Heart right ventricle (tissue), 16 donors: ENCODE measurements at regions of chr3 and their contacts with region 1.

Region 1: DNA sequence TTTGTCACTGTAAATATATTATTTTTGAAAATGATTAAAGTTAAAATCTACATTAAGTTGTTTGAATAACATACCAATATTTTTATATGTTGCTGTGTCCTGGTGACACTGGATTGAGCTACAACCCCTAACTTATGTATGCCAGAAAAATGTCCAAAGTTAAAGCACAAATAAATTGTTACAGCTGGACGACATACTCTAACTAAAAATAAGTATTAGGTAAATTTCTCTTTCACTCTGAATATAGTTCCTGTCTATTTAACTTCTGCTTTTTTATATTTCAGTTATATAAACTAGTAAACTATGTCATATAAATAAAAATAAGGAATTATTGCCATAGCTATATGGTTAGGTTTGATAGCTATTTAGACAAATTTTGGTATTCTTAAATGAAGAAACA is 118.5 kb upstream of the SAMMSON start:
- DNase-seq: no peak
- ATAC-seq: no peak
- H3K4me3 ChIP-seq: no peak overlapping the region
- H3K27ac ChIP-seq: no peak overlapping the region
- H3K4me1 ChIP-seq: peaks cover 0 to 24% (median 7%) of the 10 kb centered on the region in 9 donors
- H3K27me3 ChIP-seq: no peaks in the 10 kb centered on the region
- CTCF ChIP-seq: no peak

Region 2: DNA sequence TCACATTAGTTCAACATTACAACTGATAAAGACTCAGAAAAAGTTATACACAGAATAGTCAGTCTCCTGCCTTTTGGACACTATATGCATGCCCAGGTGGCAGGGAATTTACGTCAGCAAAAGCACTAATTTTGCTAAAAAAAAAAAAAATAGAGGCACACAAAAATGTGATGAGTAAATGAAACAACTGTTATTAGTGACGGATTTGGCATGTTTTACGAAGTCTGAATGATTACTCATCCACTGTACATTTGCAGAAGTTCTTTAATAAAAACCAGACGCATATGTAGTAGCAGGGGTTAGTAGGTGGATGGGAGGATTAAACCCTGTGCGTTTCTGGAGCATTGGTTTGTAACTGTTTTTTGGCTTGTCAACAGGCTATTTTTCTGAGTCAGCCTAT is 42.8 kb before region 1 on chr3:
- intact Hi-C with region 1: no loop called
- DNase-seq: no peak
- ATAC-seq: peak in 1 of 8 donors; percentile 6
- H3K4me3 ChIP-seq: no peak overlapping the region
- H3K27ac ChIP-seq: peak overlapping the region in 1 of 10 donors; percentile 13
- H3K4me1 ChIP-seq: peaks cover 3 to 60% (median 45%) of the 10 kb centered on the region in 9 donors
- H3K27me3 ChIP-seq: no peaks in the 10 kb centered on the region
- CTCF ChIP-seq: no peak

Region 3: DNA sequence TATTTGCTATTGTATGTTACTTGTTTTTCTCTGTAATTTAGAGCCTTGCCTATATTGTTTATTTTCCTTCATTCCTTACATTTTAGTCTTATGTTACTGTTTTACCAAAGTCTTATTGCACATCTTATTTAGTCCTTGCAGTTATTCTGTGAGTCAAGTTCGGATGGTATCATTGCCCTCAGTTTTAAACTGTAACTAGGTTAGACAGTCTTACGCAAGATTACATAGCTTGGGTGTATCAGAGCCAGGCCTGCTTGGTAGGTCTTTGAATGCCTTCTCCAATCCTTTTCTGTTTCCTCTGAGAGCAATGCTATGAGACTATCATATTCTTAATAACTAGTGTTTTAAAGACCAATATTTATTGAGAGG is 60.7 kb after region 1 on chr3:
- intact Hi-C with region 1: loop called in 1 of 10 experiments (anchors 5 kb)
- DNase-seq: no peak
- ATAC-seq: no peak
- H3K4me3 ChIP-seq: no peak overlapping the region
- H3K27ac ChIP-seq: no peak overlapping the region
- H3K4me1 ChIP-seq: peaks cover 0 to 10% (median 0%) of the 10 kb centered on the region in 9 donors
- H3K27me3 ChIP-seq: no peaks in the 10 kb centered on the region
- CTCF ChIP-seq: no peak